ENCODE measurements at regions of chr7 and their contacts with region 1.

Region 1: DNA sequence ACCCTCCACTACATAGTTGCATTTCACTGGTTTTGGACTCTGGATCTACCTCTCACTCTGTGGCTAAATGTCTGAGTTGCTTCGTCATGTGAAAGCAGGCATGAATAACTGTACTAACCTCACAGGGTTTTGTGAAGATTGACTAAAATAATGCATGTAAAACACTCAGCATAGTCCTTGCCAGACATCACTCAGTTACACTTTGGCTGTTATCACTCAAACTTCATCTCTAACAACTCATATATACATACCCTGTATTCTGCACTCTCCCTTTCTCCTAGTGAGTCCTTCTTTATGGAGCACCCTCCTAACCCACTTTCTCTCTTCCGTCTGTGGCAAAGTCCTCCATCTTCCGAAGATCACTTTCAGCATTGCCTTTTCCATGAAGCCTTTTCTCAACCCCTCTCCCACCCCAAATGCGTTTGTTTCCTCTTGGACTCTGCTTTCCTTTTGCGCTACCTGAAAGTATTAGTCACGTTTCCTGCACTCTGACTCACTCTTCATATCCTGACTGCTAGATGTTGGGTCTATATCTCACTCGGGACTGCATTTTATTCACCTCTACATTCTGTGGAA is 72.6 kb downstream of the OSBPL3 start:
- DNase-seq: peak; percentile 38
- H3K4me3 Mint-ChIP-seq: no peak overlapping the region
- H3K27ac Mint-ChIP-seq: no peak overlapping the region
- H3K4me1 Mint-ChIP-seq: peaks cover 48% of the 10 kb centered on the region
- H3K27me3 Mint-ChIP-seq: no peaks in the 10 kb centered on the region

Region 2: GRCh38 chr7:24882989-24883621 is 24.3 kb before region 1 on chr7:
- intact Hi-C with region 1: loop called (anchors 1 kb)
- DNase-seq: no peak
- H3K4me3 Mint-ChIP-seq: no peak overlapping the region
- H3K27ac Mint-ChIP-seq: peak overlapping the region; percentile 64
- H3K4me1 Mint-ChIP-seq: peaks cover 81% of the 10 kb centered on the region
- H3K27me3 Mint-ChIP-seq: no peaks in the 10 kb centered on the region

Region 3: GRCh38 chr7:24965831-24966709 is 58.7 kb after region 1 on chr7:
- intact Hi-C with region 1: loop called (anchors 1 kb)
- DNase-seq: peak; percentile 52
- H3K4me3 Mint-ChIP-seq: peak overlapping the region; percentile 59
- H3K27ac Mint-ChIP-seq: peak overlapping the region; percentile 89
- H3K4me1 Mint-ChIP-seq: peaks cover 80% of the 10 kb centered on the region
- H3K27me3 Mint-ChIP-seq: no peaks in the 10 kb centered on the region

Region 4: DNA sequence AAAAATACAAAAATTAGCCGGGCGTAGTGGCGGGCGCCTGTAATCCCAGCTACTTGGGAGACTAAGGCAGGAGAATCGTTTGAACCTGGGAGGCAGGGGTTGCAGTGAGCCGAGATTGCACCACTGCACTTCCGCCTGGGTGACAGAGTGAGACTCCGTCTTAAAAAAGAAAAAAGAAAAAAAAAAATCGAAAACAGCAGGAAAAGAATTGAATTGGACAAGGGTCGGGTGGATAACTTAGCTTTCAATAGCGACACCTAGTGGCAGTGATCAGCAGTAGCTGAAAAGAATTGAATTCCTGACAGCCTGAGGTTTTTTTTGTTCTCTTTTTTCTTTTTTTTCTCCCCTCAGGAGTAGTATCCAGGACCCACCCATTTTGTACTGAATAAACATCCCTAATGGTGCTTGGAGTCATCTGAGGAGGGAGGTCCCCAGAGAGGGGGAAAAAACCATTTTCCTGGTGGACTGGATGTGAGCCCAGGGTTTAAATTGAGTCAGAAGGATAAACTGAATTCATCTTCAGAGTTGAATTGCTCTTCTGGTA is 162.6 kb after region 1 on chr7:
- intact Hi-C with region 1: no loop called
- DNase-seq: peak; percentile 16
- H3K4me3 Mint-ChIP-seq: no peak overlapping the region
- H3K27ac Mint-ChIP-seq: no peak overlapping the region
- H3K4me1 Mint-ChIP-seq: peaks cover 27% of the 10 kb centered on the region
- H3K27me3 Mint-ChIP-seq: peaks cover 2% of the 10 kb centered on the region

Region 5: GRCh38 chr7:25093268-25093826 is 185.9 kb after region 1 on chr7:
- intact Hi-C with region 1: loop called (anchors 5 kb)
- DNase-seq: peak; percentile 67
- H3K4me3 Mint-ChIP-seq: no peak overlapping the region
- H3K27ac Mint-ChIP-seq: no peak overlapping the region
- H3K4me1 Mint-ChIP-seq: peaks cover 18% of the 10 kb centered on the region
- H3K27me3 Mint-ChIP-seq: peaks cover 18% of the 10 kb centered on the region